A549 (cell line): ENCODE measurements at regions of chr2 and their contacts with region 1.

Region 1: GRCh38 chr2:152189622-152190495 is 14.3 kb upstream of the STAM2 start:
- DNase-seq: peak; percentile 52 to 70
- ATAC-seq: peak; percentile 81 to 95; a peak in 5 of 6 replicates
- H3K4me3 ChIP-seq: no peak overlapping the region
- H3K27ac ChIP-seq: peak overlapping the region in 1 of 2 experiments; percentile 44; a peak in 3 of 6 replicates
- H3K4me1 ChIP-seq: peaks cover 3% of the 10 kb centered on the region; the same call in 1 of the 3 replicates
- CTCF ChIP-seq: peak; percentile 93
- EP300 ChIP-seq: no peak
- POLR2A ChIP-seq: no peak
- RAD21 ChIP-seq: peak; percentile 98

Region 2: GRCh38 chr2:151922845-151923666 is 266.8 kb before region 1 on chr2:
- CTCF ChIA-PET with region 1: no interaction called
- POLR2A ChIA-PET with region 1: no interaction called
- DNase-seq: peak in 1 of 2 experiments; percentile 16
- ATAC-seq: no peak
- H3K4me3 ChIP-seq: no peak overlapping the region
- H3K27ac ChIP-seq: no peak overlapping the region
- H3K4me1 ChIP-seq: peaks cover 5% of the 10 kb centered on the region; the same call in 2 of the 3 replicates
- CTCF ChIP-seq: no peak
- EP300 ChIP-seq: no peak
- POLR2A ChIP-seq: no peak
- RAD21 ChIP-seq: no peak

Region 3: DNA sequence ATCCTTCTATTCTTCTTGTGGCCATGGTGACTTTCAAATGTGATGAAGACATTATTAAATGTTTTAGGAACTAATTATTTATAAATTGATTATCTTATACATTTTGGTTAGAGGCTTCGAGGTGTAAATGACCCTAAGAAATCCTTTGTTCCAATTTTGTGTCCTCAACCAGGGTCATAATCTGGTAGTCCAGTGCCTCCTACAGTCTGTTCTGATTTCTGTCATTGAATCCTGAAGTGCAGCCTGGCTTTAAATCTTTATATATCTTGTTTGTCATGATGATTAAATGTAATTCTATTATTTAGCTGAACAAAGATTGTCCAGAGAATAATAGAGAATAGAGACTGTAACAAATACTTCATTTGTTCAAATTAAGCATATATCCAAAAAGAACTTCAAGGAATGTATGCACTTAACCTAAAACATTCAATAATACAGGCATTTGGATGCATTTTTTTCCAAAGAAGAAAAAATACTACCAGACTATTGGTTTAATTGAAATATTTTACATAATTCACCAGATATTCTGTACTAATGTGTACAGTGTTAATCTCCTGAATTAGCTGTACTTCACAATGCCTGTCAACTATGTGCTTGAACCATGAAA is 437.6 kb after region 1 on chr2:
- CTCF ChIA-PET with region 1: interaction called, 12 read pairs
- POLR2A ChIA-PET with region 1: no interaction called
- DNase-seq: peak; percentile 14 to 42
- ATAC-seq: peak; percentile 68 to 73; a peak in 4 of 6 replicates
- H3K4me3 ChIP-seq: no peak overlapping the region
- H3K27ac ChIP-seq: no peak overlapping the region
- H3K4me1 ChIP-seq: no peaks in the 10 kb centered on the region
- CTCF ChIP-seq: peak; percentile 81
- EP300 ChIP-seq: no peak
- POLR2A ChIP-seq: no peak
- RAD21 ChIP-seq: peak; percentile 86 to 87